Mammary epithelial cell (primary cell): ENCODE measurements at regions of chr2 and their contacts with region 1.

Region 1: DNA sequence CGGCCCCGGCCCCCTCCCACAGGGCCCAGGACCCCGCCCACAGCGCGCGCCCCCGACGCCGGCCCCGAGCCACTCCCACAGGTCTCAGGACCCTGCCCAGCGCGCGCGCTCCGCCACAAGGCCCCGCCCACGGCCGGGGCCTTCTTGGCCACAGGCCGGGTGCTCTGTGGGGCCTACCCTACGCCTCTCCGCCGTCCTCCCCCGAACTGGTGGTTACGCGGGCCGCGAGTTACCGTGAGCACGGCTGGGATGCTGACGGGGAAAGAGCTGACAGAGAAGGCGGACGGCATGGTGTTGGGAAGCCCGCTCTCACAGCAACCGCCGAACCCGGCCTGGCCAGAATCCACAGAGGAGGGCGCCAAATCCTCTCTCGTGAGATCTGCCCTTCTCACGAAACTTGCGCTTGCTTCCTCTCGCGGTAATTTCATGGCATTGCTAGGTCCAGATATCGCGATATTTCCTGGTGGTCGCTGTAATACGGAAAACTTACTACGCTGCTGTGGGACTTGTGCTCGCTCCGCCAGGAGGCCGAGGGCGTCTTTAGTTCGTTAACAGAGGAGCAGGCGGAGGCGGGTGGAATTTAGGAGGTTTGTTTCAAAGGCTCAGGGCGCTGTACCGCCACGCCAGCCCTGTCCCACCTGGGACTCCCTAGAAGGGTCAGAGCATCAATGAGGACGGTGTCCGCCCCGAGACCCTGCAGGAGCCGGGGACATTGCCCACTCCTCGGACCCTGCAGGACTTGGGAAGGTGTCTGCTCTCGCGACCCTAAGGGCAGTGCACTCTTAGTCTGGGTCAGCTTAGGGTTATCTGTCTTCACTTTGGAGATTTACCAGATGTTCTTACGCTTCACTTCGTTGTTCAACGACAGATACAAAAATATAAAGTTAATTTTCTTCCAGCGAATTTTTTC is at the start of gene TMEM18:
- DNase-seq: peak; percentile 97
- H3K4me3 ChIP-seq: peak within 1 kb of the TSS; percentile 68 to 96 (median 95)
- H3K27ac ChIP-seq: peak within 1 kb of the TSS; percentile 92
- H3K4me1 ChIP-seq: peaks cover 25% of the 10 kb centered on the region
- H3K27me3 ChIP-seq: no peaks in the 10 kb centered on the region
- CTCF ChIP-seq: peak; percentile 6 to 39
- total RNA-seq, gene TMEM18: 9.2 to 19.5 TPM

Region 2: GRCh38 chr2:584863-585823 is 92.2 kb before region 1 on chr2:
- CTCF ChIA-PET with region 1: no interaction called
- dilution Hi-C with region 1: no loop called
- in situ Hi-C with region 1: no loop called
- intact Hi-C with region 1: no loop called
- DNase-seq: no peak
- H3K4me3 ChIP-seq: no peak overlapping the region
- H3K27ac ChIP-seq: no peak overlapping the region
- H3K4me1 ChIP-seq: no peaks in the 10 kb centered on the region
- H3K27me3 ChIP-seq: no peaks in the 10 kb centered on the region
- CTCF ChIP-seq: no peak

Region 3: DNA sequence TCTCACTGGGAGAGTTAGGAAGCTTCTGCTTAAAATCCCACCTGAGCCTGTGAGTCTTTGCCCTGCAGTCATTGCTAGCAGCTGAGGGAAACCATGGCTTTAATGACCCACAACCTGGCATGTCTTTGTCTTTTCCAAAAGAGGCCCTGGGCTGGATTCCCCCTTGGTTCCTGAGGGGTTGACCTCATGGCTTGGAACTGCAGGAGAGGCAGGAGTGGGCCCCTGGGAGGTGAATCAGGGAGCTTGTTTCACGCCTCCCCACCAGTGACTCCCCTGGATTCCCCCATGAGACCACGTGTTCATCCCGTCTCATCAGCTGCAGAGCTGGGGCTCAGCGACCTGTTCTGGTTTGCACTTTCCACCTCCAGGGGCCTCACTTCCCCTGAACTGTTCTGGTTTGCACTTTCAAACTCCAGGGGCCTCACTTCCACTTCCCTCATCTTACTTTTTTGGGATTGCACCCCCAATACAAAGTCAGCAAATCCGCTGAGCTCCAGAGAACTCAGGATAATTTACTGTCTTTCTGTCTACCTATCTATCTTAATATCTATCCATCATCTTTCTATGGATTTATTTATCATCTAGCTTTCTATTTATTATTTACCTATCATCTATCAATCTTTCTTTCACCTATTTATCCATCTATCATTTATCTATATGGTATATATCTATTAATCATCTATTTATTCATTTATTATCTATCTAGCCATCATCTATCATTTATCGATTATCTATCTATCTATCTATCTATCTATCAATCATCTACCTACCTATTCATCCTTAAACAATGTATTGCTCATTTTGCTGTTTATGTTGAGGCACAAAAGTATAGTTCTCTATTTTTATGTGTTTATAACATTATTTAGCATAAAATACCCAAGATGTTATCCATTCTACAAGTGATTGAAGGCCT is 58.6 kb after region 1 on chr2:
- CTCF ChIA-PET with region 1: no interaction called
- dilution Hi-C with region 1: no loop called
- in situ Hi-C with region 1: no loop called
- intact Hi-C with region 1: loop called (anchors 1 kb)
- DNase-seq: no peak
- H3K4me3 ChIP-seq: no peak overlapping the region
- H3K27ac ChIP-seq: no peak overlapping the region
- H3K4me1 ChIP-seq: peaks cover 6% of the 10 kb centered on the region
- H3K27me3 ChIP-seq: no peaks in the 10 kb centered on the region
- CTCF ChIP-seq: no peak

Region 4: DNA sequence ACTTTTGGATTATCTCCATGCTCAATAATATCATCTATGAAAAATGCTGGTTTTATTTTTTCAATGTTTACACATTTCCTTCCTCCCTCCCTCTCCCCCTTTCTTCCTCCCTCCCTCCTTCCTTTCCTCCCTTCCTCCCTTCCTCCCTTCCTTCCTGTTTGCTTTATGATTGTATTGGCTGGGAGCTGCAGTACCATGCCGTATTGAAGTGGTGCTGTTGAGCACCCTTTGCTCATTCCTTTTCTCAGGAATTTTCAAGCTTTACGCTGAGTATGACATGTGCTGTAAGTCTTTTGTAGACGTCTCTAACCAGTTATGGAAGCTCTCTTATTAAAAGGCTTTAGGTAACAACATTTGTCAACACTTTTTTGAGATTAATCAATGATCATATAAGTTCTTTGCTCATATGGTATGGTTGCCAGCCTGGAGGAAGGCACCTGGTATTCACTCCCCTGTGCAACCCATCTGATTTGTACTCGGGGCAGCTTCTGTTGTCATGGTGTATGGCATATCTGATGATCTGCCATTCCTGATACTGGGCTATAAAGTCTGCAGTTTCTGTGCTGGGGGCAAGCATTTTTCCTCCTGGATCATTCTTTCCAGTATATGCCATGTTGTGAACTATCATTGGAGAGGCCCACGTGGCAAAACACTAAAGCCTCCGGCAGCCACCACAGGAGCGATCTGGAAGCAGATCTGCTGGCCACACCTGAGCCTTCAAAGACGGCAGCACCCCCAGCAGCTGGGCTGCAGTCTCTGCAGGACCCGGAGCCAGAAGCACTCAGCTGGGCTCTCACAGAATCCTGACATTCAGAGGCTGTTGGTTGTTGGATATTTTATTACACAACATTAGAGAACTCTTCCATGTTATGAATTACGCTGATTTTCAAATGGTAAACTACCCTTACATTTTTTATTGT is 374.0 kb after region 1 on chr2:
- CTCF ChIA-PET with region 1: no interaction called
- dilution Hi-C with region 1: no loop called
- in situ Hi-C with region 1: no loop called
- intact Hi-C with region 1: loop called (anchors 10 kb)
- DNase-seq: no peak
- H3K4me3 ChIP-seq: no peak overlapping the region
- H3K27ac ChIP-seq: no peak overlapping the region
- H3K4me1 ChIP-seq: peaks cover 7% of the 10 kb centered on the region
- H3K27me3 ChIP-seq: no peaks in the 10 kb centered on the region
- CTCF ChIP-seq: peak; percentile 7 to 27

Region 5: GRCh38 chr2:1137913-1138391 is 460.6 kb after region 1 on chr2:
- CTCF ChIA-PET with region 1: interaction called, 13 read pairs
- dilution Hi-C with region 1: no loop called
- in situ Hi-C with region 1: no loop called
- intact Hi-C with region 1: no loop called
- DNase-seq: no peak
- H3K4me3 ChIP-seq: no peak overlapping the region
- H3K27ac ChIP-seq: no peak overlapping the region
- H3K4me1 ChIP-seq: no peaks in the 10 kb centered on the region
- H3K27me3 ChIP-seq: no peaks in the 10 kb centered on the region
- CTCF ChIP-seq: no peak